Activated T-helper 2 cell treated with anti-CD3 and anti-CD28 coated beads, Interferon-gamma antibody, Interleukin-2, Interleukin-4, amounts not matched to agents 10 μg/mL and 5 μg/mL and 100 μg/mL, durations not matched to agents 14 hours and 24 hours and 36 hours (primary cell): ENCODE measurements at regions of chr15 and their contacts with region 1.

Region 1: DNA sequence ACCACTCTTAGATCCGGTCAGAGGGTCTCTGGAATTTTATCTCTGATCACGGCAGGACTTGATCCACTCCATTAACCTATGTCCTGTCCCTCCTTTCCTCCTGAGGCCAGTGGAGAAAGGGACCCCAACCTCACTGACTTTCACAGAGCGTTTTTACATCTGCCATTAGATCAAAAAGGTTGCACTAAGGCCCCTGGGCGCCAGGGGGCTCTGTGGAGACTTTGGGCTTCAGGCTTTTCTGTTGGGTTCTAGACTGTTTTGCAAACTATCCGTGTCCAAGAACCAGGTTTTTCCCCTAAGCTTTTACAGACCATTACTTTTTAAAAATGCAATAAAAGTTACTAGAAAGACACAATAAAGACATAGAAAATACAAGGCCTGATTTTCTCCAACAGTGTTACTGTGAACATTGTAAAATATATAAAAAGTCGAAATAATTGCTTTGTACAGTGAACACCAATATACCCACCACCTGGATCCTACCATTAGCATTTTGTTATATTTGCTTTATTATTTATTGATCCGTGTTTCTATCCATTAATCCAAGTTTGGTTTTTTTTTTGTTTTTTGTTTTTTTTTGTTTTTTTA is 159.7 kb downstream of the POLR2M start:
- DNase-seq: peak; percentile 43
- H3K4me3 Mint-ChIP-seq: no peak overlapping the region
- H3K27ac Mint-ChIP-seq: no peak overlapping the region
- H3K4me1 Mint-ChIP-seq: peaks cover 16% of the 10 kb centered on the region
- H3K27me3 Mint-ChIP-seq: peaks cover 50% of the 10 kb centered on the region

Region 2: DNA sequence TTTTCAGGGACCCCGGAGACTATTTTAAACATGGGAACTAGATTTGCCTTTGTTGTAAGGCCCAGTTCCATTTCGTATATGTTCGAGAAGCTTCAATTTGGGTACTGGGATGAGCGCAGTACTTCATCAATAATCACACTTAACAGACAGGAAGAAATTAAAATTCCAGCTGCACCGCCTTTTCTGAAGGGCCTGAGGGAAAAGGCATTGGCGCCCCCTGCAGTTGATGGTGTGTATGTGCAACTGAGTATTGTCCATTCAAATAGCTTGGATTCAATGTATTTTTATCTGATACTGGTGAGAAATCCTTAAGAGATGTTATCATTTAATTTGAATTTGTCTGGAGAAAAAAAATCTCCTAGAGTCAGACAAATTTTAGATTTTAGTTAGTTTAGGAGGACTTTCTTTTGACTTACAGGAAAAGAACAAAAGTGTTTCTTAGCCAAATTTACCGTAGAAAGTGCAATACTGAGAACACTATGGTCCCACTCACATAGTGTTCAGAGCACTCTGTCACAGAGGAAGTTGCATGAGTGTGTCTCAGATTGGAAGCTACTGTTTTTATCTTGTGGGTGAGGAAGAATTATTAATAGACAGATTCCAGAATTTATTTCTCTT is 204.7 kb after region 1 on chr15:
- intact Hi-C with region 1: loop called (anchors 2 kb)
- DNase-seq: no peak
- H3K4me3 Mint-ChIP-seq: no peak overlapping the region
- H3K27ac Mint-ChIP-seq: no peak overlapping the region
- H3K4me1 Mint-ChIP-seq: peaks cover 3% of the 10 kb centered on the region
- H3K27me3 Mint-ChIP-seq: peaks cover 45% of the 10 kb centered on the region

Region 3: GRCh38 chr15:58641660-58642059 is 775.4 kb after region 1 on chr15:
- intact Hi-C with region 1: no loop called
- DNase-seq: no peak
- H3K4me3 Mint-ChIP-seq: no peak overlapping the region
- H3K27ac Mint-ChIP-seq: no peak overlapping the region
- H3K4me1 Mint-ChIP-seq: peaks cover 15% of the 10 kb centered on the region
- H3K27me3 Mint-ChIP-seq: no peaks in the 10 kb centered on the region